ENCODE measurements at regions of chr5 and their contacts with region 1.

Region 1: DNA sequence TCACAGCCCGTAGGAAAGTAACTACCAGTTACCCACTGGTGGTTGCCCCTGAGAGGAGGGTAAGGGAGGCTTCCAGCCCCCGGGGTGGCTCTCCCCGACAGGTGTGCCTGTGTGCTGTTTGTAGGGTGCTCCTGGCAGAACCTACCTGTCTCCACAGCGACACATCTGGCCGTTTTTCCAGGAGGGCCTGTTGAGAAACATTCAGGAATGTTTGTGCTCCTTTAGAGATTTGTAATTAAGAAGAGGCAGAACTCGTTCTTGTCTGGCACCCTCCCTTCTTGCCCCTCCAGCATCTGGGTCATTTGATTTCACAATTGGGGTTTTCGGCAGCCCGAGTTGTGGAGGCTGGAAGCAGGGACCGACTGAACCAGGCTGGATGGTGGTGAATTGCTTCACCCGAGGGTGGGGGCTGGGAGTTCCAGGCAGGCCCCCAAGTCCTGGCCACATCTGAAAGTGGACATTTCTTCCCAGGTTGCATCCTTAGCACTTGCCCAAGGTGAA is 74.2 kb downstream of the WWC1 start:
- DNase-seq: peak; percentile 85
- H3K4me3 ChIP-seq: peak overlapping the region in 1 of 3 experiments; percentile 20
- H3K27ac ChIP-seq: peak overlapping the region; percentile 36
- H3K4me1 ChIP-seq: peaks cover 37% of the 10 kb centered on the region
- H3K27me3 ChIP-seq: no peaks in the 10 kb centered on the region
- CTCF ChIP-seq: peak; percentile 63 to 81

Region 2: GRCh38 chr5:168291464-168291961 is 74.1 kb before region 1 on chr5 and contains the start of gene WWC1:
- CTCF ChIA-PET with region 1: interaction called, 3 read pairs
- dilution Hi-C with region 1: no loop called
- in situ Hi-C with region 1: no loop called
- intact Hi-C with region 1: loop called (anchors 1 kb)
- DNase-seq: peak; percentile 84
- H3K4me3 ChIP-seq: peak within 1 kb of the TSS; percentile 60 to 67 (median 65)
- H3K27ac ChIP-seq: peak within 1 kb of the TSS; percentile 26
- H3K4me1 ChIP-seq: peaks cover 53% of the 10 kb centered on the region
- H3K27me3 ChIP-seq: no peaks in the 10 kb centered on the region
- CTCF ChIP-seq: peak in 1 of 2 donors; percentile 52
- total RNA-seq, gene WWC1: 17.8 to 32.0 TPM

Region 3: GRCh38 chr5:168304349-168304748 is 61.3 kb before region 1 on chr5:
- CTCF ChIA-PET with region 1: no interaction called
- dilution Hi-C with region 1: no loop called
- in situ Hi-C with region 1: no loop called
- intact Hi-C with region 1: no loop called
- DNase-seq: no peak
- H3K4me3 ChIP-seq: no peak overlapping the region
- H3K27ac ChIP-seq: no peak overlapping the region
- H3K4me1 ChIP-seq: peaks cover 35% of the 10 kb centered on the region
- H3K27me3 ChIP-seq: no peaks in the 10 kb centered on the region
- CTCF ChIP-seq: no peak

Region 4: DNA sequence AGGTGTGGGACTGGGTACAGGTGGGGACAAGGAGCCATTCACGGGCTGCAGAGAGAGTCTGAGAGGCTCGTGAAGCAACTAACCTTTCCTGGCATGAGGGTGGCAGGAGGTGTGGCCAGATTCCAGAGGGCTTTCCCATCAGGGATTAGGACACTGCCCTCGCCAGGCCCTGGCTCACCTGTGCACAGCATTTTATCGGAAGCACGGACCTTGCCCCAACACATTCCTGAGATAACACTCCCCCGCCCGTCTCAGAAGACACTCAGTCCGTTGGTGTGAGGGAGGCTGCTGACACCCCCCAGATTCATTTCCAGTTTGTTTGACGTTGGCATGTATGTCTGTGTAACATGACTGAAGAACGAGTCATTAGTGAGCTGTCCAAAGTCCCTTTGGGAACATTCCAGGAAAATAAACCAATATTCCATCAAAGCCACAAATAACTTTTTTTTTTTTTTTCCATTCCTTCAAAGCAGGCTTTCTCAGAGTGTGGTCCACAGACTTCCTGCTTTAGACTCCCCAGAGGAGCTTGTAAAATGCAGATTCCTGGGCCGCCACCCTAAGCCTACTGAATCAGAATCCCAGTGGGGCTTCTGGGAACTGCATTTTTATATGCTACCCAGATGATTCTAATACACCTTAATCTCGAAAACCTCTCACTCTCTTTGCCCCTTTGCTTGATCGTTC is 50.8 kb before region 1 on chr5:
- CTCF ChIA-PET with region 1: interaction called, 18 read pairs
- dilution Hi-C with region 1: no loop called
- in situ Hi-C with region 1: no loop called
- intact Hi-C with region 1: no loop called
- DNase-seq: peak; percentile 93
- H3K4me3 ChIP-seq: peak overlapping the region in 1 of 3 experiments; percentile 1
- H3K27ac ChIP-seq: peak overlapping the region; percentile 61
- H3K4me1 ChIP-seq: peaks cover 36% of the 10 kb centered on the region
- H3K27me3 ChIP-seq: no peaks in the 10 kb centered on the region
- CTCF ChIP-seq: peak; percentile 11 to 37

Region 5: DNA sequence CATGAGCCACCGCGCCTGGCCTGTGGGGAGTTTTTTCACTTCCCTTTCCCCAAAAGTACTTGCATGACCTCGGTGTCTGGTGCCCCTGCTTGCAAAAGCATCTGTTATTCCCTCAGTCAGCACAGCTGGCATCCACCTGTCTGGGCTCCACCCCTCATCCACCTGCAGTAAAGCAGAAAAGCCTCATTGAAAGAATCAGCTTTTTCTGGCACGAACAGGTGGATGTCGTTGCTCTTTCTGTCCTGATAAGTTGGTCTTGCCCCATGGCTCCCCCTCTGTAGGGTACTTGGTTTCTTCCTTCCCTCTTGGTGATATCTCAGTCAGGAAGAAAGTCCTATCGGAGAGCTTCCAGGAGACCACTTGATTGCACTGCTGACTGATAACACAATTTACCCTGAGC is 36.8 kb before region 1 on chr5:
- CTCF ChIA-PET with region 1: interaction called, 4 read pairs
- dilution Hi-C with region 1: no loop called
- in situ Hi-C with region 1: no loop called
- intact Hi-C with region 1: loop called (anchors 1 kb)
- DNase-seq: no peak
- H3K4me3 ChIP-seq: no peak overlapping the region
- H3K27ac ChIP-seq: no peak overlapping the region
- H3K4me1 ChIP-seq: peaks cover 31% of the 10 kb centered on the region
- H3K27me3 ChIP-seq: no peaks in the 10 kb centered on the region
- CTCF ChIP-seq: no peak

Region 6: GRCh38 chr5:168346441-168346840 is 19.2 kb before region 1 on chr5:
- CTCF ChIA-PET with region 1: no interaction called
- dilution Hi-C with region 1: no loop called
- in situ Hi-C with region 1: no loop called
- intact Hi-C with region 1: loop called (anchors 1 kb)
- DNase-seq: peak; percentile 81
- H3K4me3 ChIP-seq: no peak overlapping the region
- H3K27ac ChIP-seq: no peak overlapping the region
- H3K4me1 ChIP-seq: peaks cover 31% of the 10 kb centered on the region
- H3K27me3 ChIP-seq: no peaks in the 10 kb centered on the region
- CTCF ChIP-seq: no peak

Region 7: DNA sequence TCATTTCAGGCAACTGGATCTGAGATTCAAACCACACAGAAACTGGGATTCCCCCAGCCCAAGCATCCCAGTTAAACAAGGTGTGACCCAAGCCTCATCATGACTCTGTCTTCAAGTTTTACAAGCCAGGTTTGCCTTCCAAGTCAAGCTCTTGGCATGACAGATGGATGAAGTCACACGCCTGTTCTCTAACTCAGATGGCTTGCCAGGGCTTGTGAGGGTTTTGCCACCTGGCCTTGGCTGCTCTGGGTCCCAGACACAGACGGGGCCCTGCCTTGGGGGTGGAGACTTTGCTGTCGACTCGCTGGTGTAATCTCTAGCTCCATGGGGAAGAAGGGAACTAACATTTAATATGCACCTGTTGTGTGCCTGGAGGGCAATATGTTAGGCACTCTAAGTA is 24.9 kb after region 1 on chr5:
- CTCF ChIA-PET with region 1: no interaction called
- dilution Hi-C with region 1: no loop called
- in situ Hi-C with region 1: no loop called
- intact Hi-C with region 1: loop called (anchors 1 kb)
- DNase-seq: peak; percentile 97
- H3K4me3 ChIP-seq: no peak overlapping the region
- H3K27ac ChIP-seq: peak overlapping the region; percentile 57
- H3K4me1 ChIP-seq: peaks cover 15% of the 10 kb centered on the region
- H3K27me3 ChIP-seq: no peaks in the 10 kb centered on the region
- CTCF ChIP-seq: no peak

Region 8: GRCh38 chr5:168409580-168410458 is 44.2 kb after region 1 on chr5:
- CTCF ChIA-PET with region 1: no interaction called
- dilution Hi-C with region 1: no loop called
- in situ Hi-C with region 1: no loop called
- intact Hi-C with region 1: loop called (anchors 1 kb)
- DNase-seq: peak; percentile 79
- H3K4me3 ChIP-seq: peak overlapping the region in 1 of 3 experiments; percentile 11
- H3K27ac ChIP-seq: peak overlapping the region; percentile 70
- H3K4me1 ChIP-seq: peaks cover 54% of the 10 kb centered on the region
- H3K27me3 ChIP-seq: no peaks in the 10 kb centered on the region
- CTCF ChIP-seq: no peak

Region 9: GRCh38 chr5:168443950-168444700 is 78.5 kb after region 1 on chr5:
- CTCF ChIA-PET with region 1: no interaction called
- dilution Hi-C with region 1: no loop called
- in situ Hi-C with region 1: no loop called
- intact Hi-C with region 1: no loop called
- DNase-seq: no peak
- H3K4me3 ChIP-seq: no peak overlapping the region
- H3K27ac ChIP-seq: no peak overlapping the region
- H3K4me1 ChIP-seq: no peaks in the 10 kb centered on the region
- H3K27me3 ChIP-seq: no peaks in the 10 kb centered on the region
- CTCF ChIP-seq: no peak